CD8-positive, alpha-beta memory T cell (primary cell): ENCODE measurements at regions of chr10 and their contacts with region 1.

Region 1: DNA sequence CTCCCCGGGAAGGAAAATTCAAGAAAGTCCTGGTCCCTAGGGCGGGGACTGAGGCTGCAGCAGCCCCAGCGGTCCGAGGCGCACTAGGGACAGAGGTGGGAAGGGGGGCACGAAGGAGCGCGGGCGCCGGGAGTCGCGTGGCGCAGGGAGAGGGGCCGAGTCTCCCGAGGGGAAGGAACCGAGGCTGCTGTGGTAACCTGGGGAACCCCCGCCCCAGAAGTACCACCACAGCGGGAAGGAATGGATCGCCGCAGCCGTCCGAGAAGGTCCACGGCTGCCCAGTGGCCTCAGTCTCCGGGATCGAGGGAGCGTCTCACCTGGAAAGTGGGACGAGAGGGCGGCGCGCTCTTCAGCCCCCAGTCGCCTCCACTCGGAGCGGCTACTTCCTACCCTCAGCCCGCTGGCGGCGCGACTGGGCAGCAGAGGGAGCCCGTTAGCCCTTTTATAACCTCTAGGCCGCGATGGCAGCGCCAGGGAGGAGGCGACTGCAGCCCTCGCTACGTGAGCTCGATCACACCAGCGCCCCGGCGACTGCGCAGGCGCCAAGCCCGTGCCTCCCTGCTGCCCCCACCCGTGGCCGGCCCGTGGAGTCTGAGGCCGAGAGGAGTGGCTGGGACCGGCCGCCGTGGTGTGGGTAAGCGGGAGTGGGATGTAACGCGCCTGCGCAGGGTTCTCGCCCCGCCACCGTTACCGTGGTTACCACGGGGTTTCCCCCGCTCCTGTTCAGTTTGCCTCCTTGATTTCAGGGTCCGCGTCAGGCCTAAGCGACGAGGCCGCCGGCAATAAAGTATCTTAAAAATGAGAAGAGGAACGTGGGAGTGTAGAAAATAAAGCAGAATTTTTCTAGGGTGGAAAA is at the start of gene P4HA1:
- DNase-seq: peak; percentile 92 to 99 (median 98)
- H3K4me3 ChIP-seq: peak within 1 kb of the TSS; percentile 70
- H3K4me3 Mint-ChIP-seq: peak within 1 kb of the TSS; percentile 84 to 97 (median 91)
- H3K27ac ChIP-seq: peak within 1 kb of the TSS; percentile 88
- H3K27ac Mint-ChIP-seq: peak within 1 kb of the TSS; percentile 91 to 99 (median 98)
- H3K4me1 ChIP-seq: peaks cover 14% of the 10 kb centered on the region
- H3K4me1 Mint-ChIP-seq: peaks cover 27 to 38% (median 38%) of the 10 kb centered on the region in 3 donors
- H3K27me3 ChIP-seq: no peaks in the 10 kb centered on the region
- H3K27me3 Mint-ChIP-seq: peaks cover 0 to 2% of the 10 kb centered on the region in 2 donors
- total RNA-seq, gene P4HA1: 28.7 to 31.9 TPM

Region 2: GRCh38 chr10:73018632-73019031 is 78.0 kb before region 1 on chr10:
- CTCF ChIA-PET with region 1: no interaction called
- POLR2A ChIA-PET with region 1: no interaction called
- DNase-seq: no peak
- H3K4me3 ChIP-seq: no peak overlapping the region
- H3K4me3 Mint-ChIP-seq: no peak overlapping the region
- H3K27ac ChIP-seq: no peak overlapping the region
- H3K27ac Mint-ChIP-seq: peak overlapping the region in 1 of 8 donors; percentile 50
- H3K4me1 ChIP-seq: no peaks in the 10 kb centered on the region
- H3K4me1 Mint-ChIP-seq: peaks cover 9 to 17% (median 16%) of the 10 kb centered on the region in 3 donors
- H3K27me3 ChIP-seq: no peaks in the 10 kb centered on the region
- H3K27me3 Mint-ChIP-seq: peaks cover 0 to 2% of the 10 kb centered on the region in 2 donors

Region 3: GRCh38 chr10:73083221-73083620 is 13.5 kb before region 1 on chr10:
- CTCF ChIA-PET with region 1: interaction called, 22 read pairs
- POLR2A ChIA-PET with region 1: interaction called, 4 read pairs
- DNase-seq: no peak
- H3K4me3 ChIP-seq: no peak overlapping the region
- H3K4me3 Mint-ChIP-seq: no peak overlapping the region
- H3K27ac ChIP-seq: no peak overlapping the region
- H3K27ac Mint-ChIP-seq: no peak overlapping the region
- H3K4me1 ChIP-seq: no peaks in the 10 kb centered on the region
- H3K4me1 Mint-ChIP-seq: peaks cover 7 to 31% (median 16%) of the 10 kb centered on the region in 3 donors
- H3K27me3 ChIP-seq: no peaks in the 10 kb centered on the region
- H3K27me3 Mint-ChIP-seq: no peaks in the 10 kb centered on the region

Region 4: GRCh38 chr10:73110345-73110849 is 13.7 kb after region 1 on chr10 and contains the start of gene NUDT13:
- CTCF ChIA-PET with region 1: interaction called, 18 read pairs
- POLR2A ChIA-PET with region 1: interaction called, 8 read pairs
- DNase-seq: peak in 4 of 5 donors; percentile 8 to 56 (median 38)
- H3K4me3 ChIP-seq: peak within 1 kb of the TSS; percentile 52
- H3K4me3 Mint-ChIP-seq: peak within 1 kb of the TSS; percentile 87 to 95 (median 91)
- H3K27ac ChIP-seq: peak within 1 kb of the TSS; percentile 73
- H3K27ac Mint-ChIP-seq: peak within 1 kb of the TSS; percentile 58 to 93 (median 89)
- H3K4me1 ChIP-seq: no peaks in the 10 kb centered on the region
- H3K4me1 Mint-ChIP-seq: peaks cover 8 to 15% (median 14%) of the 10 kb centered on the region in 3 donors
- H3K27me3 ChIP-seq: no peaks in the 10 kb centered on the region
- H3K27me3 Mint-ChIP-seq: no peaks in the 10 kb centered on the region
- total RNA-seq, gene NUDT13: 1.7 TPM

Region 5: GRCh38 chr10:73159038-73159648 is 62.5 kb after region 1 on chr10:
- CTCF ChIA-PET with region 1: interaction called, 105 read pairs
- POLR2A ChIA-PET with region 1: interaction called, 5 read pairs
- DNase-seq: peak; percentile 25 to 69 (median 50)
- H3K4me3 ChIP-seq: no peak overlapping the region
- H3K4me3 Mint-ChIP-seq: no peak overlapping the region
- H3K27ac ChIP-seq: no peak overlapping the region
- H3K27ac Mint-ChIP-seq: peak overlapping the region in 4 of 8 donors; percentile 33 to 81 (median 70)
- H3K4me1 ChIP-seq: peaks cover 13% of the 10 kb centered on the region
- H3K4me1 Mint-ChIP-seq: peaks cover 35 to 43% (median 38%) of the 10 kb centered on the region in 3 donors
- H3K27me3 ChIP-seq: no peaks in the 10 kb centered on the region
- H3K27me3 Mint-ChIP-seq: no peaks in the 10 kb centered on the region

Region 6: GRCh38 chr10:73167783-73168464 is 71.2 kb after region 1 on chr10 and contains the starts of genes ECD and FAM149B1:
- CTCF ChIA-PET with region 1: interaction called, 105 read pairs
- POLR2A ChIA-PET with region 1: interaction called, 6 read pairs
- DNase-seq: peak; percentile 83 to 94 (median 90)
- H3K4me3 ChIP-seq: peak within 1 kb of the TSS; percentile 100
- H3K4me3 Mint-ChIP-seq: peak within 1 kb of the TSS; percentile 99 to 100 (median 100)
- H3K27ac ChIP-seq: peak within 1 kb of the TSS; percentile 100
- H3K27ac Mint-ChIP-seq: peak within 1 kb of the TSS; percentile 99 to 100 (median 100)
- H3K4me1 ChIP-seq: peaks cover 27% of the 10 kb centered on the region
- H3K4me1 Mint-ChIP-seq: peaks cover 38 to 48% (median 45%) of the 10 kb centered on the region in 3 donors
- H3K27me3 ChIP-seq: no peaks in the 10 kb centered on the region
- H3K27me3 Mint-ChIP-seq: peaks cover 0 to 3% of the 10 kb centered on the region in 2 donors
- total RNA-seq, gene ECD: 33.2 to 35.8 TPM
- total RNA-seq, gene FAM149B1: 13.1 to 13.7 TPM

Region 7: DNA sequence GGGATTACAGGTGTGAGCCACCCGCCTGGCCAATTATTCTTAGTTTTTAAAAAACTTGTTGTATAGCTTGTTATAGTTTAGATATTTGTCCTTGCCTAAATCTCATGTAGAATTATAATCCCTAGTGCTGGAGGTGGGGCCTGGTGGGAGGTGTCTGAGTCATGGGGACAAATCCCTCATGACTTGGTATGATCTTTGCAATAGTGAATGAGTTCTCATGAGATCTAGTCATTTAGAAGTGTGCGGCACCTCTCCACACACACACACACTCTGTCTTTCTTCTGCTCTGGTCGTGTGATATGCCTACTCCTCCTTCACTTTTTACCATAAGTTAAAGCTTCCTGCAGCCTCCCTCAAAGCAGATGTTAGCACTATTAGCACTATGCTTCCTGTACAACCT is 108.4 kb after region 1 on chr10:
- CTCF ChIA-PET with region 1: no interaction called
- POLR2A ChIA-PET with region 1: no interaction called
- DNase-seq: no peak
- H3K4me3 ChIP-seq: no peak overlapping the region
- H3K4me3 Mint-ChIP-seq: no peak overlapping the region
- H3K27ac ChIP-seq: no peak overlapping the region
- H3K27ac Mint-ChIP-seq: no peak overlapping the region
- H3K4me1 ChIP-seq: no peaks in the 10 kb centered on the region
- H3K4me1 Mint-ChIP-seq: no peaks in the 10 kb centered on the region
- H3K27me3 ChIP-seq: no peaks in the 10 kb centered on the region
- H3K27me3 Mint-ChIP-seq: no peaks in the 10 kb centered on the region

Region 8: GRCh38 chr10:73246783-73247508 is 150.3 kb after region 1 on chr10 and contains the start of gene DNAJC9:
- CTCF ChIA-PET with region 1: interaction called, 3 read pairs
- POLR2A ChIA-PET with region 1: interaction called, 14 read pairs
- DNase-seq: peak; percentile 94 to 97 (median 95)
- H3K4me3 ChIP-seq: peak within 1 kb of the TSS; percentile 82
- H3K4me3 Mint-ChIP-seq: peak within 1 kb of the TSS; percentile 94 to 100 (median 96)
- H3K27ac ChIP-seq: peak within 1 kb of the TSS; percentile 89
- H3K27ac Mint-ChIP-seq: peak within 1 kb of the TSS; percentile 93 to 99 (median 96)
- H3K4me1 ChIP-seq: peaks cover 53% of the 10 kb centered on the region
- H3K4me1 Mint-ChIP-seq: peaks cover 50 to 67% (median 64%) of the 10 kb centered on the region in 3 donors
- H3K27me3 ChIP-seq: no peaks in the 10 kb centered on the region
- H3K27me3 Mint-ChIP-seq: no peaks in the 10 kb centered on the region
- total RNA-seq, gene DNAJC9: 75.0 to 76.4 TPM